IMR-90 (cell line): ENCODE measurements at regions of chr5 and their contacts with region 1.

Region 1: DNA sequence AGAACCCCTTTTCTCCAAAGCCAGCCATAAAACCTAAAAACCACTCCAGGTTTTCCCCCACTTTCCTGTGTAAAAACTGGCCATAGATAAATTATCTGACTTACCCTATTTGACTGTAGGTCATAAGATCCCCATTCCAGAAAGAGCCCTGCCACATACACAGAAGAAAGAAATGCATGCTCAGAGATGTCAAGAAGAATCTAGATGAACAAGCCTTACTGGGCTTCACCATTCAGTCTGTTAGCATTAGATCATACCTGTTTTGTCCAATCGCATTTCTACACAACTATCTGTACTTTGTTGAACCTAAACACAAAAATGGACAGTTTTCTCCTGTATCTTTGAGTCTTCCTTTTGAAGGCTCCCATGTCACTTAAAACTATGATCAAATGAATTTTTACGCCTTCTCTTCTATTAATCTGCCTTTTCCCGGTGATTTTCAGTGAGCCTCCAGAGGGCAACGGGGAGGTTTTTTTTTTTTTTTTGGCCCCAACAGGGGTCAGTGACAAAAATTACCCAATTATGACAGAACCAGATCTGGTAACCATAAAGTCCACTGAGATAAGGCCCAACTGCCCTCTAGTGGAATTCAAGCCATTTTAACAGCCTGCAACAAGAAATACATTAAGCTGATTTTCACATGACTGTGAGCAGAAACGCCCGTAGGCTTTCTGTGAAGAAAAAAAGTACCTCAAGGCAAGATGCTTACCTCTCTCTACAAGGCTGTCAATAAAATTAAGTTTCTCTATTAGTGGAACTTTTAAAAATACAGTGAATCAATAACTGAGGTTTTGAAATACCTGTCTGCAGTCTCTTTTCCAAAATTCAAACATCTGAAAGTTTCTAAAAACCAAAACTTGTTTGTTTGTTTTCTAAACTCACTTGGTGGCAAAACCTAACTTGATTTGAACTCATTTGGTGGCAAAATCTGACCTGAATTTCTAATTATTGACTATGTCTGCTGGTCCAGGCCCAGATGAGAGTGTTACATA is 49.9 kb upstream of the FST start:
- DNase-seq: peak; percentile 87
- ATAC-seq: peak; percentile 67
- H3K4me3 ChIP-seq: no peak overlapping the region
- H3K27ac ChIP-seq: peak overlapping the region; percentile 80
- H3K4me1 ChIP-seq: peaks cover 14% of the 10 kb centered on the region
- H3K27me3 ChIP-seq: no peaks in the 10 kb centered on the region
- CTCF ChIP-seq: peak; percentile 82
- POLR2A ChIP-seq: peak; percentile 48; the same call in 1 of the 2 replicates
- RAD21 ChIP-seq: peak; percentile 88

Region 2: GRCh38 chr5:53123702-53124101 is 306.9 kb before region 1 on chr5:
- CTCF ChIA-PET with region 1: no interaction called
- POLR2A ChIA-PET with region 1: no interaction called
- dilution Hi-C with region 1: no loop called
- in situ Hi-C with region 1: no loop called
- intact Hi-C with region 1: loop called (anchors 5 kb)
- DNase-seq: peak; percentile 40
- ATAC-seq: peak; percentile 36; the same call in 1 of the 2 replicates
- H3K4me3 ChIP-seq: no peak overlapping the region
- H3K27ac ChIP-seq: no peak overlapping the region
- H3K4me1 ChIP-seq: peaks cover 5% of the 10 kb centered on the region; the same call in 1 of the 2 replicates
- H3K27me3 ChIP-seq: no peaks in the 10 kb centered on the region; the same call in 1 of the 2 replicates
- CTCF ChIP-seq: peak; percentile 41
- POLR2A ChIP-seq: no peak
- RAD21 ChIP-seq: peak; percentile 46

Region 3: GRCh38 chr5:53180538-53180937 is 250.0 kb before region 1 on chr5:
- CTCF ChIA-PET with region 1: no interaction called
- POLR2A ChIA-PET with region 1: no interaction called
- dilution Hi-C with region 1: no loop called
- in situ Hi-C with region 1: loop called (anchors 5 kb)
- intact Hi-C with region 1: no loop called
- DNase-seq: no peak
- ATAC-seq: no peak
- H3K4me3 ChIP-seq: no peak overlapping the region
- H3K27ac ChIP-seq: no peak overlapping the region
- H3K4me1 ChIP-seq: no peaks in the 10 kb centered on the region; the same call in 1 of the 2 replicates
- H3K27me3 ChIP-seq: no peaks in the 10 kb centered on the region
- CTCF ChIP-seq: no peak
- POLR2A ChIP-seq: no peak
- RAD21 ChIP-seq: no peak

Region 4: DNA sequence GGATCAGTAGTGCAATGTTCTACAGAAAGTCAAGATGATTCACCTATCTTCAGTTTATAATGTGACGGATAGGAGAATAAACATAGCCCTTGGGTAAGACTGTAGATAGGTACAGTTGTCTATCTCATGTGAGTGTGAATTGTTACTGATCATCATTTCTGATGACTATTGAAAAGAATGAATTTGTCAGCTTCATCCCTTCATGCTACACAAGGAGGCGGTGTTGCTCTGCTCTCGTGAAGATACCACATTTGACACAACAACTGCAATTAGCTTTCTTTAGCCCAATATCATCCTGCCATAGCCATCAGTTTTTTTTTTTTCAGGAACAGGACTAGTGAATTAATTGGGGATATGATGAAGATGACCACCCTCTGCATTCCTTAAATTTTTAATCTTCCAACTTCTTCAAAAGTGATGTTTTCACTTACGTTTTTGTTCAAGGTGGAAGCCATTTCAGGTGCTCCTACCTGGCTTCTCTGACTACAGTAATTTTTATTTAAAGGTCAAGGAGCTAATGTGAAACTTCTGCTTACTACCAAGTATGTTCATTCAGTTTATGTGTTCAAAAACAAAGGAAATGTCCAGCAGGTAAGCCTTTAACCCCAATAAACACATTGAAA is 168.1 kb before region 1 on chr5:
- CTCF ChIA-PET with region 1: no interaction called
- POLR2A ChIA-PET with region 1: no interaction called
- dilution Hi-C with region 1: no loop called
- in situ Hi-C with region 1: loop called (anchors 5 kb)
- intact Hi-C with region 1: loop called (anchors 1 kb)
- DNase-seq: peak; percentile 72
- ATAC-seq: peak; percentile 80
- H3K4me3 ChIP-seq: no peak overlapping the region
- H3K27ac ChIP-seq: no peak overlapping the region
- H3K4me1 ChIP-seq: peaks cover 2% of the 10 kb centered on the region; the same call in 1 of the 2 replicates
- H3K27me3 ChIP-seq: no peaks in the 10 kb centered on the region
- CTCF ChIP-seq: peak; percentile 90
- POLR2A ChIP-seq: peak; percentile 50; the same call in 1 of the 2 replicates
- RAD21 ChIP-seq: peak; percentile 96

Region 5: DNA sequence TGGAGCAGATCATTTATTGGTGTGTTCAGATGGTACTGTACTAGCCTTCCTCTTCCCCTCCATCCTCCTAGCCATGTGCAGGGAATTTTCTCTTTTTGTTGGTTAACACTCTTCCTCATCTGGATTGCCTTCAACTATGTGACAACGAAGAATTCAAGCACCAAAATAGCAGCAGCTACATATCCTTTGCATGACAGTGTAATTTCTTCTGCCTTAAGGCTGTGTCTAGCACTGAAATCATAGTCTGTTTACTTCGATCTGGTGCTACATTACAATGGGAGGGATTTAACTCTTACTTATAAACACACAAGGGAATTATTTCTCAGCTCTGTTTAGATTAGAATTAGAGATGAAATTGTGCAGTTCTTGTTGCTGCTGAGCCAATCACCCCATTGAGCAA is 619.4 kb after region 1 on chr5:
- CTCF ChIA-PET with region 1: no interaction called
- POLR2A ChIA-PET with region 1: no interaction called
- dilution Hi-C with region 1: no loop called
- in situ Hi-C with region 1: no loop called
- intact Hi-C with region 1: no loop called
- DNase-seq: peak; percentile 70
- ATAC-seq: peak; percentile 95
- H3K4me3 ChIP-seq: no peak overlapping the region
- H3K27ac ChIP-seq: peak overlapping the region; percentile 64; the same call in 1 of the 2 replicates
- H3K4me1 ChIP-seq: peaks cover 4% of the 10 kb centered on the region; the same call in 1 of the 2 replicates
- H3K27me3 ChIP-seq: no peaks in the 10 kb centered on the region
- CTCF ChIP-seq: no peak
- POLR2A ChIP-seq: no peak
- RAD21 ChIP-seq: no peak